Endothelial cell of umbilical vein (primary cell): ENCODE measurements at regions of chr20 and their contacts with region 1.

Region 1: DNA sequence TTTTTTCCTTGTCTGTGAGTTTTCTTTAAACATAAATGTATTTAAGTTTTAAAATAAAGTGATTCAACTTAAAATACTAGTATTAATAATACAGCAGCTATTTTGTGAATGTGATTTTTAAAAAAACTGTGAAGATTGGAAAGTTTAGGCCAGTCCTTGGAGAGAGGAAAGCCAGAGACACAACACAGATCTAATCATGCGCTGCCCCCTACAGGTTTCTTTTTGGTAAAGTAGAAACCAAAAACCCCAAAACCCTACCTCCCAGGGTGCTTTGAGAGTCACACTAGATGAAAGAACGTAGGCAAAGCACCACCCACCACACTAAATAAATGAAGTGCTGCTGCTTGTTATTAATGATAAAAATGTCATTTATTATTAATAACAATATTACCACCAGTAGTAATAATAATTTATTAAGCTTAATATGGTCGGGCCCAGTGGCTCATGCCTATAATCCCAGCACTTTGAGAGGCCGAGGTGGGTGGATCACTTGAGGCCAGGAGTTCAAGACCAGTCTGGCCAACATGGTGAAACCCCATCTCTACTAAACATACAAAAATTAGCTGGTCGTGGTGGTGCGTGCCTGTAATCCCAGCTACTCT is 33.7 kb downstream of the SLC9A8 start:
- DNase-seq: peak; percentile 48
- H3K4me3 ChIP-seq: no peak overlapping the region
- H3K27ac ChIP-seq: no peak overlapping the region
- H3K4me1 ChIP-seq: no peaks in the 10 kb centered on the region
- H3K27me3 ChIP-seq: no peaks in the 10 kb centered on the region
- CTCF ChIP-seq: peak; percentile 41 to 56
- POLR2A ChIP-seq: no peak

Region 2: GRCh38 chr20:49372095-49372726 is 474.1 kb before region 1 on chr20:
- CTCF ChIA-PET with region 1: no interaction called
- POLR2A ChIA-PET with region 1: no interaction called
- dilution Hi-C with region 1: no loop called
- intact Hi-C with region 1: no loop called
- DNase-seq: no peak
- H3K4me3 ChIP-seq: no peak overlapping the region
- H3K27ac ChIP-seq: no peak overlapping the region
- H3K4me1 ChIP-seq: no peaks in the 10 kb centered on the region
- H3K27me3 ChIP-seq: peaks cover 12 to 13% of the 10 kb centered on the region in 2 experiments
- CTCF ChIP-seq: no peak
- POLR2A ChIP-seq: no peak

Region 3: DNA sequence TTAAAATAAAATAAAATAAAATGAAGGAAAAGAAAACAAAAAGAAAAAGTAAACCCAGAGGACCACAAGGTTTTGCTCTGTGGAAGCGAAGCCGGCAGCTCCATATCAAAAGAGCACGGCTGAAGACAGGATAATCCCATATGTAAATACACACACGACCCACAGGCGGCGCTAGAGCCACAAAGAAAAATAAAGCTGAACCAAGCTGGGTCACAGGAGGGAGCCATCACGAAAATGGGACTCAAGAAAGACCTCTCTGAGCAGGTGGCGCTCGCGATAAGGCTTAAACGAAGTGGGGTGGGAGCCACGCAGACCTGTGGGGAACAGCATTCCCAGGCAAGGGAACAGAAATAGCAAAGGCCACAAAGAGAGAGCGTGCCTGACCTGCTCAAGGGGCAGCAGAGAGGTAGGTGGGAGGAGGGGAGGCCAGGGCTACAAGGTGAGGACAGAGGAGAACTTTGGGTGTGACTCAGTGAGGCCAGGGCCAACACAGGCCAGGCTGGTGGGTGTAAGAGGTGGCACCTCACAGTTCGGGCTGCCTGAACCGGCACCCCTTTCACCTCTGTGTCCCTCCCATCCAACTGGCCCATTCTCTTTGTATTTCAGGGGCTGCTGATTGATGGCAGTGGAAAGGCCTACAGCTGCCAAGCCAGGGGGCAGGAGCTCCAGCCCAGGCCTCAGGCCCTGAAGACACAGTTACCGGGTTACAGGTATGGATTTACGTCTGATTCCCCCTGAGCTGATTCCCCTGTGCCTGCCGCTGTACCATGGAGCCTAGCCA is 304.4 kb before region 1 on chr20:
- CTCF ChIA-PET with region 1: interaction called, 54 read pairs
- POLR2A ChIA-PET with region 1: no interaction called
- dilution Hi-C with region 1: no loop called
- intact Hi-C with region 1: loop called (anchors 5 kb)
- DNase-seq: peak; percentile 82
- H3K4me3 ChIP-seq: no peak overlapping the region
- H3K27ac ChIP-seq: no peak overlapping the region
- H3K4me1 ChIP-seq: no peaks in the 10 kb centered on the region
- H3K27me3 ChIP-seq: no peaks in the 10 kb centered on the region
- CTCF ChIP-seq: peak; percentile 73 to 82
- POLR2A ChIP-seq: no peak

Region 4: GRCh38 chr20:49649672-49650071 is 196.6 kb before region 1 on chr20:
- CTCF ChIA-PET with region 1: interaction called, 13 read pairs
- POLR2A ChIA-PET with region 1: no interaction called
- dilution Hi-C with region 1: loop called (anchors 25 kb)
- intact Hi-C with region 1: no loop called
- DNase-seq: no peak
- H3K4me3 ChIP-seq: no peak overlapping the region
- H3K27ac ChIP-seq: no peak overlapping the region
- H3K4me1 ChIP-seq: no peaks in the 10 kb centered on the region
- H3K27me3 ChIP-seq: no peaks in the 10 kb centered on the region
- CTCF ChIP-seq: no peak
- POLR2A ChIP-seq: no peak

Region 5: DNA sequence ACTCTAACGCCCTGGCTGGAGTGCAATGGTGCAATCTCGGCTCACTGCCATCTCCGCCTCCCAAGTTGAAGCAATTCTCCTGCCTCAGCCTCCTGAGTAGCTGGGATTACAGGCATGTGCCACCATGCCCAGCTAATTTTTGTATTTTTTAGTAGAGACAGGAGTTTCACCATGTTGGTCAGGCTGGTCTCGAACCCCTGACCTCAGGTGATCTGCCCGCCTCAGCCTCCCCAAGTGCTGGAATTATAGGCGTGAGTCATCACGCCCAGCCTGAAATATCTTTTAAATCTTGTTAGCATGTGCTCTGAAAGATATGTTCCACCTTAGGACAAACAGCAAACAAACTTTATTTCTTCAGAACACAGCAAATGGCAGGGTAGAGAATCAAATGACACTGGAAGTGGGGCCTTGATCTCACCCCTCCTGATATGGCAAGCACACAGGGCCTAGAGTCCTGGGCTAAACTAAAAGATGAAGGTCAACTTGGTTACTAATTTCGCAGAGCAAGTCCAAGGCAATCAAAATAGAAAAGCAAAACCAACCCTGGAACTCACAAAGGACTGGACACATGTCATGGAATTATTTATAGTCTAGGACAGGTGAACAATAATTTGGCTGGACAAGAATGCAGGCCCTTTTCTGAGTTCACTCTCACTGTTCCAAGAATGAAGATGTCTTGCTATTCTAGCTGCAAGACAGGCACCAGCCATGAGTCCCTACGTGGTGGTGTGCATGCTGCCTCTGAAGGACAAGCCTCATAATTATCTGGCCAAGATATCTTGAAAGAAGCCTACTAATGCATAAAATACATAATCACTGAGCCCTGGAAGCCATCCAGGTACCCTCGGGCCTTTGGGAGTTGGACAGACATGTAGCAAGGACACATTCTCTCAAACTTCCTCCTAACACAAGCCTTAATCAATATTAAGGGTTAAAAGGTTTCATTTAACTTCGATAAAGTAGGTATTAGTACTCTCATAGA is 168.2 kb before region 1 on chr20:
- CTCF ChIA-PET with region 1: interaction called, 10 read pairs
- POLR2A ChIA-PET with region 1: no interaction called
- dilution Hi-C with region 1: loop called (anchors 25 kb)
- intact Hi-C with region 1: no loop called
- DNase-seq: no peak
- H3K4me3 ChIP-seq: no peak overlapping the region
- H3K27ac ChIP-seq: no peak overlapping the region
- H3K4me1 ChIP-seq: peaks cover 17% of the 10 kb centered on the region
- H3K27me3 ChIP-seq: no peaks in the 10 kb centered on the region
- CTCF ChIP-seq: no peak
- POLR2A ChIP-seq: no peak

Region 6: DNA sequence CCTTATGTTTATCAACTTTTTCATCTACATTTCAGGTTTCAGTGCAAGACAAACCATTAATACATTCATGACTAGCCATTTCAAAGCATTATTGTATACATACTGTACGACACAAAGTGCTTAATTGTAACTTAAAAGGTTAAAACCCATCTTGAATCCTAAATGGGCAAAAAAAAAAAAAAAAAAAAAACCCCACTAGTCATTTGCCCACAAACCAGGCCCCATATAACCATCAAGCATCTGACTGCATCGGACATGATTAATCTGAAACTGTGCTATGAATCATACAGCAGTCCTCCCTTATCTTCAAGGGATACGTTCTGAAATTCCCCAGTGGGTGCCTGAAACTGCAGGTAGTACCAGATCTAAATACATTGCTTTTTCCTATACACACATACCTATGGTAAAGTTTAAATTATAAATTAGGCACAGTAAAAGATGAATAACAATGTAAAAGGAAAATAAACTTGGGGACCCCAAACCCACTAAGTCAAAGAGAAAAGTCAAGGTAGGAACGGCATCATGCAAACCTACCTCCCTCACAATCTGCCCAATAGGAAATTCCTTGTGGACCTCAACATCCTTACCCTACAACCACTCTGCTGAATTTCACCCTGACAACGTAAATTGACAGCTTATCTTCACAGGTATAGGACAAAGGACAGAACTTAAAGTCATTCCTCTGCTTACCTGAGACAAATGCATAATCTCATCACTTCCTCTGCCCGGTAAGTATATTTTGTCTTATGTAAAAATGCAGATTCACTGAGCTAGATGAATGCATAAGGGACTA is 146.9 kb before region 1 on chr20:
- CTCF ChIA-PET with region 1: interaction called, 10 read pairs
- POLR2A ChIA-PET with region 1: no interaction called
- dilution Hi-C with region 1: no loop called
- intact Hi-C with region 1: no loop called
- DNase-seq: peak; percentile 57
- H3K4me3 ChIP-seq: no peak overlapping the region
- H3K27ac ChIP-seq: peak overlapping the region; percentile 98
- H3K4me1 ChIP-seq: peaks cover 73% of the 10 kb centered on the region
- H3K27me3 ChIP-seq: no peaks in the 10 kb centered on the region
- CTCF ChIP-seq: no peak
- POLR2A ChIP-seq: no peak

Region 7: GRCh38 chr20:49825521-49826033 is 20.7 kb before region 1 on chr20:
- CTCF ChIA-PET with region 1: interaction called, 11 read pairs
- POLR2A ChIA-PET with region 1: interaction called, 4 read pairs
- dilution Hi-C with region 1: no loop called
- intact Hi-C with region 1: no loop called
- DNase-seq: no peak
- H3K4me3 ChIP-seq: no peak overlapping the region
- H3K27ac ChIP-seq: no peak overlapping the region
- H3K4me1 ChIP-seq: no peaks in the 10 kb centered on the region
- H3K27me3 ChIP-seq: no peaks in the 10 kb centered on the region
- CTCF ChIP-seq: no peak
- POLR2A ChIP-seq: no peak

Region 8: DNA sequence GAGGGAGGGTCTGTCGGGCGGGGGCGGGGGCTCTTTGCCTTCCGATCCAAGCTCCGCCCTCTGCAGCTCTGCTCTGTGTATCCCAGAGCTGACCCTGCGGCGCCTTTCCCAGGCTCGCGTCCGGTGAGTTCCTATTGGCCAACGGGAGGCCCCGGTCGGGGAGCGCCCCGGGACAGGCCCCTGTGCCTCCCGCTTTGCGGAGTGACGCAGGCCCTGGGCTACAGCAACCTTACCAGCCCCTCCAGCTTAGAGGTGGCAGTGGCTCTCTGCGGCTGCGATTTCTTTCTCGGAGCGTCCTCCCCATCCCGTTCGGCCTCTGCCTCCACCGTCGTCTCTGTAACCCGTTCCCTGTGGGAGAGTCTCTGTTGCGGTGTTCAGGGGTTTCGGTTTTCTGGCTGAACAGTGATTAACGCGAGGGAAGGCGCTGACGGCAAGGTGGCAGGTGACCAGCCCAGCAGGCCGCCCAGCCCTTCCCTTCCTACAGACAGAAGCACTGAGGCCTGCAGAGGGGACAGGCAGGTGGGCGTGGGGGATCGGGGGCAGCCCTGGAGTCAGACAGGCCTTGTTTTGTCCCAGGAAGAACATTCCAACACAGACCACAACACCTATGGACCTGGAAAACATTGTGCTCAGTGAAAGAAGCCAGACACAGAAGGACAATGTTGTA is 326.2 kb after region 1 on chr20:
- CTCF ChIA-PET with region 1: no interaction called
- POLR2A ChIA-PET with region 1: no interaction called
- dilution Hi-C with region 1: no loop called
- intact Hi-C with region 1: no loop called
- DNase-seq: peak; percentile 75
- H3K4me3 ChIP-seq: peak overlapping the region; percentile 42 to 61 (median 46)
- H3K27ac ChIP-seq: peak overlapping the region; percentile 57
- H3K4me1 ChIP-seq: peaks cover 9% of the 10 kb centered on the region
- H3K27me3 ChIP-seq: no peaks in the 10 kb centered on the region
- CTCF ChIP-seq: no peak
- POLR2A ChIP-seq: peak; percentile 49